Naive thymus-derived CD4-positive, alpha-beta T cell (primary cell): ENCODE measurements at regions of chr22 and their contacts with region 1.

Region 1: GRCh38 chr22:50341977-50342650 is 1.0 kb upstream of the PPP6R2 start:
- DNase-seq: peak; percentile 76 to 93 (median 86)
- ATAC-seq: peak; percentile 71
- H3K4me3 ChIP-seq: peak overlapping the region; percentile 86
- H3K4me3 Mint-ChIP-seq: peak overlapping the region; percentile 73 to 91 (median 88)
- H3K27ac ChIP-seq: peak overlapping the region; percentile 96
- H3K27ac Mint-ChIP-seq: peak overlapping the region in 7 of 9 donors; percentile 82 to 96 (median 93)
- H3K4me1 ChIP-seq: peaks cover 13 to 16% of the 10 kb centered on the region in 2 donors
- H3K4me1 Mint-ChIP-seq: peaks cover 0 to 18% (median 9%) of the 10 kb centered on the region in 7 donors
- H3K27me3 ChIP-seq: no peaks in the 10 kb centered on the region
- H3K27me3 Mint-ChIP-seq: no peaks in the 10 kb centered on the region

Region 2: DNA sequence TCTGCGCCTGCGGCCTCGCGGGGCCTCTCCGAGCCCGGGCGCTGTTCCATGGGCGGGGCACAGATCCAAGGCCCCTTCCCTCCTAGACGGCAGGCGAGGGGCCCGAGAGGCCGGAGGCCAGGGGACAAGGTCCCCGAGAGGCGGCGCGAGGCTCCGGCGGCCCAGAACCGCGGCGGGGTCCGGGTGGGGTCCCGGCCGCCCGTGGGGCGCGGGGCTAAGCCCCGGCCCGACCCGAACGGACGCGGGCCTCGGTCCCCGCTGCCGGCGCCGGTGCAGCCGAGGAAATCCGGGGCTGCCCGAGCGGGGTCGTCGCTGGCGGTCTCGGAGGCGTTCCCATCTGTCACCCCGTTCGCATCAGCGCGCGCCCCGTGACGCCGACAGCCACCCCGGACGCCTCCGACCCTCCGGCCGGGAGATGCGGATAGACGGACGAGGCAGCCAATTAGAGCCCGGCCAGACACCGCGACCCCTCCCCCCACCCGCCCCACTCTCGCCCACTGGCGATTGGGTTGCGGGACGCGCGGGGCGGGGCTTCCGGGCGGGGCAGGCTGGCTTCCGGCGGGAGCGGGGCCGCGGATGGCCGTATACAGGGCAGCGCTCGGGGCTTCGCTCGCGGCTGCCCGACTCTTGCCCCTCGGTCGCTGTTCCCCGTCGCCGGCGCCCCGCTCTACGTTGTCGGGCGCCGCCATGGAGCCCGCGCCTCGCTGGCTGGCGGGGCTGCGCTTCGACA is 141.5 kb before region 1 on chr22 and contains the start of gene SELENOO:
- CTCF ChIA-PET with region 1: no interaction called
- POLR2A ChIA-PET with region 1: no interaction called
- intact Hi-C with region 1: loop called in 1 of 2 experiments (anchors 2 kb)
- DNase-seq: peak; percentile 76 to 93 (median 83)
- ATAC-seq: peak; percentile 94
- H3K4me3 ChIP-seq: peak within 1 kb of the TSS; percentile 48
- H3K4me3 Mint-ChIP-seq: peak within 1 kb of the TSS; percentile 74 to 90 (median 82)
- H3K27ac ChIP-seq: peak within 1 kb of the TSS; percentile 93
- H3K27ac Mint-ChIP-seq: peak within 1 kb of the TSS in 7 of 9 donors; percentile 51 to 85 (median 76)
- H3K4me1 ChIP-seq: peaks cover 4 to 15% of the 10 kb centered on the region in 2 donors
- H3K4me1 Mint-ChIP-seq: peaks cover 19 to 33% (median 27%) of the 10 kb centered on the region in 7 donors
- H3K27me3 ChIP-seq: no peaks in the 10 kb centered on the region
- H3K27me3 Mint-ChIP-seq: no peaks in the 10 kb centered on the region
- total RNA-seq, gene SELENOO: 26.7 to 36.6 (median 32.4) TPM

Region 3: GRCh38 chr22:50211147-50211546 is 131.0 kb before region 1 on chr22:
- CTCF ChIA-PET with region 1: no interaction called
- POLR2A ChIA-PET with region 1: no interaction called
- intact Hi-C with region 1: no loop called
- DNase-seq: no peak
- ATAC-seq: no peak
- H3K4me3 ChIP-seq: no peak overlapping the region
- H3K4me3 Mint-ChIP-seq: no peak overlapping the region
- H3K27ac ChIP-seq: no peak overlapping the region
- H3K27ac Mint-ChIP-seq: peak overlapping the region in 6 of 9 donors; percentile 20 to 82 (median 42)
- H3K4me1 ChIP-seq: no peaks in the 10 kb centered on the region
- H3K4me1 Mint-ChIP-seq: peaks cover 7 to 36% (median 29%) of the 10 kb centered on the region in 7 donors
- H3K27me3 ChIP-seq: no peaks in the 10 kb centered on the region
- H3K27me3 Mint-ChIP-seq: no peaks in the 10 kb centered on the region

Region 4: DNA sequence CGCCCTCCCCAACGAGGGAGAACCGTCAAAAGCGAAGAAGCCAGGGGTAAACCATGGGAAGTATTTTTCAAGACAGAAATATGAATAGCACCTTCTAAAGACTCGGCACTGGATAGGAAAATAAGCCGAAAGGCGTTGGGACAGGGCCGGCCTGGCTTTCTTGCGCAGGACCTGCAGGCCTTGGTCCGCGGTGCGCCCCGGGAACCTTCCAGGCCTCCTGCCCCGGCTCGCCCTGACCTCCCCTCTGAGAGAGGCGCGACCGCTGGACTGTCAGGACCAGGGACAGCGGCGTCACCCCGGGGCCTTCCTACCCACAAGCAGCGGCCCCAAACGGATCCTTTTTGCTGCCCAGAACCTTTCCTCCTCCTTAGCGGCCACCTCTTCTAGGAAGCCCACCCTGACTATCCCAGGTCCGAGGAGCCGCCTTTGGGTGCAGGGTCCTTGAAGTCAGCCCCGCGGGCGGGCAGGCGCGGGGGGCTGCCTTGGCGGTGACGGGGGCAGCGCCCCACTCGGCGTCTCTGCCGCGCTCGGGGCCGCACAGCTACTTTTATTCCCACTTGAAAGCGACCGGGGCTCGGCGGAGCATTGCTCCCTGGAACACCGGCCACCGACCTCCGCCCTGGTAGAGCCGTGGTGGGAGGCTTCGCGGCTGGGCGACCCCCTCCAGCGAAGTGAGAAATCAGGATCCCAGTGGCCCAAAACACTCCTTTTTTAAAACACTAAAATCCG is 71.3 kb before region 1 on chr22:
- CTCF ChIA-PET with region 1: no interaction called
- POLR2A ChIA-PET with region 1: no interaction called
- intact Hi-C with region 1: loop called (anchors 1 kb)
- DNase-seq: peak; percentile 44 to 80 (median 67)
- ATAC-seq: peak; percentile 72
- H3K4me3 ChIP-seq: peak overlapping the region; percentile 68
- H3K4me3 Mint-ChIP-seq: peak overlapping the region; percentile 56 to 82 (median 74)
- H3K27ac ChIP-seq: peak overlapping the region; percentile 23
- H3K27ac Mint-ChIP-seq: peak overlapping the region in 2 of 9 donors; percentile 33 to 48
- H3K4me1 ChIP-seq: peaks cover 3 to 18% of the 10 kb centered on the region in 2 donors
- H3K4me1 Mint-ChIP-seq: peaks cover 5 to 20% (median 13%) of the 10 kb centered on the region in 7 donors
- H3K27me3 ChIP-seq: no peaks in the 10 kb centered on the region
- H3K27me3 Mint-ChIP-seq: peaks cover 0 to 16% (median 0%) of the 10 kb centered on the region in 5 donors

Region 5: DNA sequence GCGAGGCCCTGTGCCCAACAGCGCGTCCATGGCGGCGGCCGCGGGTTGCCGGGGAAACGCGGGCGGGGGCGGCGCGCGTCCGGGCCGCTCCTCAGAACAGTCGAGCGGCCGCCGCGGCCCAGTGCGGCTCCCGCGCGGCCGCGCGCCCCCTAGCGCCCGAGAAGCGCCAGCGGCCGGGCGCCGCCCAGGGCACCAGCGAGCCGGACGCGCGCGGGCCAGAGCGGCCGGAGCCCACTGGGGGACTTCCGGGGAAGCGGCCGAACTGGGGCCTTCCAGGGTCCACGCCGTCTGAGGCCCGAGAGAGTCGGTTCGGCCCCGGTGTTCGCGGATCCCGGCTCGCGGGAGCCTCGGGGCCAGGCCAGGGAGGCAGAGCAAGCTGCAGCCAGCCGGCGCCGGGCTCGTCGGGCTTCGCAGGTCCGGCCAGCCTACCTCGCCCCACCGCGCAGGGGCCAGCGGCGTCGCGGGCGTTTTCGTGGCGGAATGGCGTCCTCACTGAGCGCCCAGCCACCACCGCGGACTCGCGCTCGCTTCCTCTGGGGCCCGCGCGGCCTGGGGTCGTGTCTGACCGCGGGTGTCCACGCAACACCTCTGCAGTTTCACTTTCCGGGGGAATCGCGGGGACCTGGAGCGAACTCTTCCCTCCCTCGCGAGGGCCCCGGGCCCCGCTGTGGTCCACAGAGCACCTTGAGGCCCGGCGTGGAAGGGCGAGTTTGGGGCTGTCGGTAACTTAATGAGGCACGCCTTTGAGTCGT is 15.0 kb before region 1 on chr22 and contains the start of gene DENND6B:
- CTCF ChIA-PET with region 1: interaction called, 6 read pairs
- POLR2A ChIA-PET with region 1: interaction called, 14 read pairs
- intact Hi-C with region 1: loop called (anchors 1 kb)
- DNase-seq: peak in 8 of 9 donors; percentile 26 to 86 (median 58)
- ATAC-seq: peak; percentile 98
- H3K4me3 ChIP-seq: peak within 1 kb of the TSS; percentile 60
- H3K4me3 Mint-ChIP-seq: peak within 1 kb of the TSS; percentile 76 to 88 (median 81)
- H3K27ac ChIP-seq: peak within 1 kb of the TSS; percentile 64
- H3K27ac Mint-ChIP-seq: peak within 1 kb of the TSS; percentile 22 to 88 (median 55)
- H3K4me1 ChIP-seq: peaks cover 0 to 4% of the 10 kb centered on the region in 2 donors
- H3K4me1 Mint-ChIP-seq: peaks cover 5 to 15% (median 9%) of the 10 kb centered on the region in 7 donors
- H3K27me3 ChIP-seq: no peaks in the 10 kb centered on the region
- H3K27me3 Mint-ChIP-seq: peaks cover 0 to 33% (median 0%) of the 10 kb centered on the region in 5 donors
- total RNA-seq, gene DENND6B: 2.1 to 4.0 (median 2.8) TPM

Region 6: GRCh38 chr22:50498322-50498890 is 156.3 kb after region 1 on chr22:
- CTCF ChIA-PET with region 1: interaction called, 4 read pairs
- POLR2A ChIA-PET with region 1: interaction called, 3 read pairs
- intact Hi-C with region 1: loop called in 1 of 2 experiments (anchors 1 kb)
- DNase-seq: peak in 8 of 9 donors; percentile 60 to 76 (median 70)
- ATAC-seq: peak; percentile 92
- H3K4me3 ChIP-seq: no peak overlapping the region
- H3K4me3 Mint-ChIP-seq: no peak overlapping the region
- H3K27ac ChIP-seq: no peak overlapping the region
- H3K27ac Mint-ChIP-seq: no peak overlapping the region
- H3K4me1 ChIP-seq: no peaks in the 10 kb centered on the region
- H3K4me1 Mint-ChIP-seq: peaks cover 3 to 10% (median 9%) of the 10 kb centered on the region in 7 donors
- H3K27me3 ChIP-seq: no peaks in the 10 kb centered on the region
- H3K27me3 Mint-ChIP-seq: peaks cover 0 to 5% (median 0%) of the 10 kb centered on the region in 5 donors

Region 7: GRCh38 chr22:50562523-50563412 is 220.7 kb after region 1 on chr22 and contains the start of gene SYCE3:
- CTCF ChIA-PET with region 1: no interaction called
- POLR2A ChIA-PET with region 1: no interaction called
- intact Hi-C with region 1: loop called in 1 of 2 experiments (anchors 1 kb)
- DNase-seq: peak; percentile 92 to 99 (median 96)
- ATAC-seq: peak; percentile 100
- H3K4me3 ChIP-seq: peak within 1 kb of the TSS; percentile 75
- H3K4me3 Mint-ChIP-seq: peak within 1 kb of the TSS; percentile 85 to 97 (median 94)
- H3K27ac ChIP-seq: peak within 1 kb of the TSS; percentile 67
- H3K27ac Mint-ChIP-seq: peak within 1 kb of the TSS; percentile 77 to 96 (median 87)
- H3K4me1 ChIP-seq: peaks cover 0 to 4% of the 10 kb centered on the region in 2 donors
- H3K4me1 Mint-ChIP-seq: peaks cover 6 to 24% (median 14%) of the 10 kb centered on the region in 7 donors
- H3K27me3 ChIP-seq: no peaks in the 10 kb centered on the region
- H3K27me3 Mint-ChIP-seq: peaks cover 0 to 14% (median 0%) of the 10 kb centered on the region in 5 donors
- total RNA-seq, gene SYCE3: not detected